GM18951 (cell line): ENCODE measurements at regions of chr10 and their contacts with region 1.

Region 1: DNA sequence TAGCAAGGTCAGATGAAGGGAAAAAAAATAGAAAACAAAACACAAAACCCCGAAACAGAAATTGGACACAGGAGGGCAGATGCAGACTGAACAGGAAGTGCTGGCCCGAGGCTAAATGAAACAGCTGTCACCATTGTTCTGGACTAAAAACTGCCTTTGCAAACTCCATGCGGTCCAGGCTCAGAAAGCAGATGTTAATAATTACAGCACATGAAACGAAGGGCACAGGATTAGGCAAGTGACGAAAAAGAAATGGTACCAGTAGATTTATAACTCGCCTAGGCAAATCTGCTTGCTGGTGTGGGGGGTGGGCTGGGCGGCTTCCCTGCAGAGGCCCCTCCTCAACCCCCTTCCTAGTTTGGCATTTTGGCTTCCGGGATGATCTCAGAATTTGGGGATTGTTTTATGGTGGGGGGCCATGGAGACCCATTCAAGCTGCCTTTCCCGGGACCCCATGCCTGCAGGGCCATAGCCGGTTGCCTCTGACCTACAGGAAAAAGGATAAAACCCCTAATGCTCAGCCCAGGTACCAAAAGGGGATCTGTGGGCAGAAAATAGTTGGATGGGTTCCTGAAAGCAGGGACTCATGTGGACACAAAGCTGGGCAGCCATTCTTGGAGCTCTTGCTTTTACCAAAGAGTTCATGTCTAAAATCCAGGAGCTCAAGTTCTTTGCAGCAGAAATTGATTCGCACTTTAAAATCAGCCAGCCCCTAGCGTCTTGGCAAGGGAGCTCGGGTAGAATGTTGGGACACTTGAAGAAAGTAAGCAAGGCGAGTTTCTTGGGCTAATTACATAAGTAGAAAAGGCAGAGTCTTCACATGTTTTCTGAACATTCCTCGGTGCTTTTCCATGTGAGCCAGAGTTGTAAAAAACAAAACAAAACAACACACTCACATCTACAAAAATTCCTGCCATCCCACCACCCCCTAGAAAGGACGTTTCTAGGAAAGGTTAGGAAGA is 39.0 kb upstream of the EMX2 start:
- POLR2A ChIP-seq: no peak

Region 2: GRCh38 chr10:118447478-118448270 is 944.1 kb after region 1 on chr10:
- in situ Hi-C with region 1: loop called (anchors 25 kb)
- POLR2A ChIP-seq: no peak